ENCODE measurements at regions of chr14 and their contacts with region 1.

Region 1: DNA sequence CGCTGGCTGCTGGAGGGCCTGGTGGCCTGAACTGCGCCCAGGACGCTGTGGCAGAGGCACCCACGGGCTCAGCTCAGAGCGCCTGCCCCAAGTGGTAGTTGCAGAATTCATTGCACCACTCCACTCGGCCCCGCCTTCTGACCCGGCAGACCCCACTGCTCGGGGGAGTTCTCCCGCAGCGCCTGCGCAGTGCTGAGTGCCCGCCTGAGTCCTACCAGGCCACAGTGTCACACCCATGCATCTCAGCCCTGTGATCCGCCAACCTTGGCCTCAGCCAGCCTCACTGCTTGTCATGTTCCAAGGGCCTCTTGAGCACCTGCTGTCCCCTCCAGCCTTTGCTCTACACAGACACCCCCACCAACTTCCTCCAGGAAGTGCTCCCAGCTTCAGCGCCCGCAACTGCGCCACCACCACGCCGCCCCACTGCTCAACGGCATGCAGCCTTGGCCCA is 12.2 kb downstream of the DEGS2 start:
- DNase-seq: peak; percentile 42 to 87 (median 75)
- ATAC-seq: peak; percentile 89
- H3K4me3 ChIP-seq: peak overlapping the region; percentile 24 to 34
- H3K4me3 Mint-ChIP-seq: peak overlapping the region; percentile 77
- H3K27ac ChIP-seq: peak overlapping the region; percentile 3 to 39
- H3K27ac Mint-ChIP-seq: peak overlapping the region; percentile 89
- H3K4me1 ChIP-seq: peaks cover 24% of the 10 kb centered on the region
- H3K4me1 Mint-ChIP-seq: peaks cover 34% of the 10 kb centered on the region
- H3K27me3 ChIP-seq: no peaks in the 10 kb centered on the region
- H3K27me3 Mint-ChIP-seq: no peaks in the 10 kb centered on the region
- CTCF ChIP-seq: peak; percentile 7

Region 2: DNA sequence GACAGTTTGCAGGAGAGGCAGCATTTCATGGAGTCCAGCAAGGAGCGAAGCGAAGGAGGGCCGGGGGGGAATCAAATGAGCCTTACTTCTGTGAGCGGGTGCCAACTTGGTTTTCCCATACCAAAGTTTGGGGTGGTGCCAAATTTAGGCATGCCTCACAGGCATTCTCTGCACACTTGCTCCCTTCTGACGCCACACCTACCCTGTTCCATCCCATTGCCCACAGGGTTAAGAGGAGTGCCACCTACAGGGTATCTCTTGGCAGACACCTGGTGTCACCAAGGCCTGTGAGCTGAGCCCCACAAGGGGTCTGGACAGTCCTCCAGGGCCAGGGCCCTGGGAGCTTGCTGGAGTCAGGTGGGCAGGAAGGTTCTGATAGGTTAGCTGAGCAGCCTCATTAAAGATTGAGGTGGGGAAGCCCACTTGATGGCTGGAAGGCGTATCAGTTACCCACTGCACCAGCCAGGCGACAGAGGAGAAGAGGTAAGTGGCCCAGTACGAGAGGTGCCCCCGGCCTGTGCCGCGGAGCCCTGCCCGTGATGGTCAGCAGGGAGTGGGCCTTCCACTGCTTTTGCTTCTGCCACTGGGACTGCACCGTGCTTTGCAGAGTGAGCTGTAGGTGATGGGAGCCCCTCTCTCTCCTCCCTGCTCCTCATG is 33.0 kb before region 1 on chr14:
- CTCF ChIA-PET with region 1: no interaction called
- POLR2A ChIA-PET with region 1: no interaction called
- intact Hi-C with region 1: loop called in 1 of 2 experiments (anchors 5 kb)
- DNase-seq: no peak
- ATAC-seq: no peak
- H3K4me3 ChIP-seq: no peak overlapping the region
- H3K4me3 Mint-ChIP-seq: no peak overlapping the region
- H3K27ac ChIP-seq: no peak overlapping the region
- H3K27ac Mint-ChIP-seq: peak overlapping the region; percentile 91
- H3K4me1 ChIP-seq: peaks cover 30% of the 10 kb centered on the region
- H3K4me1 Mint-ChIP-seq: peaks cover 49% of the 10 kb centered on the region
- H3K27me3 ChIP-seq: no peaks in the 10 kb centered on the region
- H3K27me3 Mint-ChIP-seq: no peaks in the 10 kb centered on the region
- CTCF ChIP-seq: no peak

Region 3: GRCh38 chr14:100726550-100727085 is 579.4 kb after region 1 on chr14 and contains the start of gene DLK1:
- CTCF ChIA-PET with region 1: no interaction called
- POLR2A ChIA-PET with region 1: no interaction called
- intact Hi-C with region 1: no loop called
- DNase-seq: no peak
- ATAC-seq: no peak
- H3K4me3 ChIP-seq: no peak within 1 kb of the TSS
- H3K4me3 Mint-ChIP-seq: no peak within 1 kb of the TSS
- H3K27ac ChIP-seq: no peak within 1 kb of the TSS
- H3K27ac Mint-ChIP-seq: no peak within 1 kb of the TSS
- H3K4me1 ChIP-seq: no peaks in the 10 kb centered on the region
- H3K4me1 Mint-ChIP-seq: no peaks in the 10 kb centered on the region
- H3K27me3 ChIP-seq: no peaks in the 10 kb centered on the region
- H3K27me3 Mint-ChIP-seq: peaks cover 36% of the 10 kb centered on the region
- CTCF ChIP-seq: no peak
- total RNA-seq, gene DLK1: not detected

Measured in CD8-positive, alpha-beta T cell (primary cell).